Activated CD4-positive, alpha-beta memory T cell treated with anti-CD3 and anti-CD28 coated beads for 36 hours (primary cell): ENCODE measurements at regions of chr6 and their contacts with region 1.

Region 1: GRCh38 chr6:111804627-111805235 is 68.5 kb downstream of the FYN start:
- DNase-seq: peak; percentile 86
- H3K4me3 Mint-ChIP-seq: peak overlapping the region; percentile 59
- H3K27ac Mint-ChIP-seq: peak overlapping the region; percentile 91
- H3K4me1 Mint-ChIP-seq: peaks cover 94% of the 10 kb centered on the region
- H3K27me3 Mint-ChIP-seq: no peaks in the 10 kb centered on the region

Region 2: GRCh38 chr6:111793711-111794111 is 11.0 kb before region 1 on chr6:
- CTCF ChIA-PET with region 1: interaction called, 9 read pairs
- POLR2A ChIA-PET with region 1: interaction called, 12 read pairs
- intact Hi-C with region 1: loop called (anchors 1 kb)
- DNase-seq: peak; percentile 75
- H3K4me3 Mint-ChIP-seq: peak overlapping the region; percentile 78
- H3K27ac Mint-ChIP-seq: peak overlapping the region; percentile 93
- H3K4me1 Mint-ChIP-seq: peaks cover 77% of the 10 kb centered on the region
- H3K27me3 Mint-ChIP-seq: no peaks in the 10 kb centered on the region

Region 3: GRCh38 chr6:111818539-111819226 is 14.0 kb after region 1 on chr6:
- CTCF ChIA-PET with region 1: interaction called, 31 read pairs
- POLR2A ChIA-PET with region 1: interaction called, 70 read pairs
- intact Hi-C with region 1: no loop called
- DNase-seq: peak; percentile 44
- H3K4me3 Mint-ChIP-seq: peak overlapping the region; percentile 23
- H3K27ac Mint-ChIP-seq: peak overlapping the region; percentile 79
- H3K4me1 Mint-ChIP-seq: peaks cover 68% of the 10 kb centered on the region
- H3K27me3 Mint-ChIP-seq: no peaks in the 10 kb centered on the region

Region 4: GRCh38 chr6:111823831-111824607 is 19.3 kb after region 1 on chr6:
- CTCF ChIA-PET with region 1: interaction called, 31 read pairs
- POLR2A ChIA-PET with region 1: interaction called, 70 read pairs
- intact Hi-C with region 1: loop called (anchors 1 kb)
- DNase-seq: peak; percentile 44
- H3K4me3 Mint-ChIP-seq: peak overlapping the region; percentile 21
- H3K27ac Mint-ChIP-seq: peak overlapping the region; percentile 91
- H3K4me1 Mint-ChIP-seq: peaks cover 80% of the 10 kb centered on the region
- H3K27me3 Mint-ChIP-seq: no peaks in the 10 kb centered on the region

Region 5: GRCh38 chr6:111997078-111997852 is 192.5 kb after region 1 on chr6:
- CTCF ChIA-PET with region 1: no interaction called
- POLR2A ChIA-PET with region 1: no interaction called
- intact Hi-C with region 1: loop called (anchors 2 kb)
- DNase-seq: peak; percentile 87
- H3K4me3 Mint-ChIP-seq: peak overlapping the region; percentile 48
- H3K27ac Mint-ChIP-seq: peak overlapping the region; percentile 28
- H3K4me1 Mint-ChIP-seq: peaks cover 48% of the 10 kb centered on the region
- H3K27me3 Mint-ChIP-seq: no peaks in the 10 kb centered on the region